Panc1 (cell line): ENCODE measurements at regions of chr9 and their contacts with region 1.

Region 1: GRCh38 chr9:36987891-36988290 is 46.2 kb downstream of the PAX5 start:
- DNase-seq: no peak
- ATAC-seq: 0 out of 2 replicates have a peak, but pooled peaks have one; percentile 29
- H3K4me3 ChIP-seq: no peak overlapping the region
- H3K27ac ChIP-seq: no peak overlapping the region
- H3K4me1 ChIP-seq: no peaks in the 10 kb centered on the region; the same call in 1 of the 2 replicates
- H3K27me3 ChIP-seq: peaks cover 19% of the 10 kb centered on the region
- CTCF ChIP-seq: no peak

Region 2: DNA sequence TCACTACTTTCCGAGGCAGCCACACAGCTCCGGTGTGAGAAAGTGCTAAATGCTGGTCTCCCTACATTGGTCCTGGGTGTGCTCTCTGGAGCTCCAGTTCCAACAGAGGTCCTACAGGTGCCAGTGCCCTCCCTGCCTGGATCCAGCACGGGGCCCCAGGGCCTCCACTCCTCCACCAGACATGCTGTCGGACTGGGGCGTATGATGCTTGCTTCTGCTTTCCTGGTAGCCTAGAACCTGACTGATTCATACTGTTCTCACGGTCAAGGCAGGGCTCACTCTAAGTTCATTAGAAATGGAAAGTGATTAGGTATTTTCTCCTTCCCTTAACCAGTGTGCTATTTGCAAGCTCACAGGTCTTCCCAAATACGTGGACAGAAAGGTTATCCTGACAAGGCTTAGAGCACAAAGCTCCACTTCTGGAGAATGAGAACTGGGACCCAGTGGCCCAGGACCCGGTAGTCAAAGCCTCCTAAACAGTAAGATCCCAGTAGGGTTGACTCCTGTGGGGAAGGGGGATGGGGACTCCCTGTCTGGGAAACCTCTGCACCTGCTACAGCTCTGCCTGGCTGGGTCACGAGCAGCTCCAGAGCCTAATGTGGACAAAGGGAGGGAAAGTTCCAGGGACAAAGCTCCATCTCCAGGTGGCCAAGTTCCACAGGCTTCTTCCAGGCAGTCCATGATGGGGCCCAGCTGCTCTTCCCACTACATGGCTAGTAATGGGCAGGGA is 52.0 kb before region 1 on chr9:
- CTCF ChIA-PET with region 1: no interaction called
- POLR2A ChIA-PET with region 1: no interaction called
- in situ Hi-C with region 1: no loop called
- intact Hi-C with region 1: loop called (anchors 5 kb)
- DNase-seq: no peak
- ATAC-seq: no peak
- H3K4me3 ChIP-seq: no peak overlapping the region
- H3K27ac ChIP-seq: no peak overlapping the region
- H3K4me1 ChIP-seq: peaks cover 3% of the 10 kb centered on the region; the same call in 1 of the 2 replicates
- H3K27me3 ChIP-seq: no peaks in the 10 kb centered on the region
- CTCF ChIP-seq: no peak

Region 3: DNA sequence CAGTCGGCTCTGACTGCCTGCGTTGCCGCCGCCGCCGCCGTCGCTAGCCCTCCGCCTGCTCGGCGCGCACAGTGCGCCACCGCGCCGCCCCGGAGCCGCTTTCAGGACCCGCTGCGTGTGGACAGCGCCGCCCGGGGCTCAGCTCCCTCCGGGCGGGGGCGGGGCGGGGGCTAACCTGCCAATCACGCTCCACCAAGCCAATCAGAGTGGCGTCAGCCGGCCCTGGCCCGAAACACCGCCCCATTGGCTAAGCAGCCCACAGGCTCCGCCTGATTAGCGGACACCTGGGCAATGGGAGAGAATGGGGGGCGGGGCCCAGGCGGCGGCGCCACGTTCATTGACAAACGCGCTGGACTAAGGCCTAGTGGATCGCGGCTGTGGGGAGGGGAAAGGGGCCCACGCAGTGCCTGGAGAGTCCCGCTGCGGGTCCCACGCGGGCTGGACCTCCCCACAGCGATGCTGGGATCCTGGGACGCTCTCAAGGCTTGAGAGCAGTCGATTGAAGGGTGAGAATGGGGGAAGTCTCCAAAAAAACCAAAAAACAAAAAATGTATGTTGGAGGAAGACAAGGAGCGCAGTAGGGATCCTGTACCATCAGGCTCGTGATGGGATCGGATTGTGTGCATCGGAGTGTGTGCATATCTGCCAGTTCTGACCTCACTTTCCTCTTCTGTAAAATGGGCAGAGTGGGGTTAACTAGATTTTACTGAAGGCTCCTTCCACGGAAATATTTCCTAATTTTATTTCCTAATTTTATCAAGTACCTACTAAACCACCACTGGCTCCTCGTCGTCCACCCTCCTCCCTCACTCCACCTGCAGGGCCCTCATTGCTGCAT is 39.9 kb after region 1 on chr9:
- CTCF ChIA-PET with region 1: no interaction called
- POLR2A ChIA-PET with region 1: no interaction called
- in situ Hi-C with region 1: no loop called
- intact Hi-C with region 1: no loop called
- DNase-seq: peak; percentile 65
- ATAC-seq: peak; percentile 97
- H3K4me3 ChIP-seq: peak overlapping the region; percentile 43 to 54
- H3K27ac ChIP-seq: no peak overlapping the region
- H3K4me1 ChIP-seq: peaks cover 28% of the 10 kb centered on the region
- H3K27me3 ChIP-seq: peaks cover 62% of the 10 kb centered on the region
- CTCF ChIP-seq: no peak